OCI-LY7 (cell line): ENCODE measurements at regions of chr2 and their contacts with region 1.

Region 1: DNA sequence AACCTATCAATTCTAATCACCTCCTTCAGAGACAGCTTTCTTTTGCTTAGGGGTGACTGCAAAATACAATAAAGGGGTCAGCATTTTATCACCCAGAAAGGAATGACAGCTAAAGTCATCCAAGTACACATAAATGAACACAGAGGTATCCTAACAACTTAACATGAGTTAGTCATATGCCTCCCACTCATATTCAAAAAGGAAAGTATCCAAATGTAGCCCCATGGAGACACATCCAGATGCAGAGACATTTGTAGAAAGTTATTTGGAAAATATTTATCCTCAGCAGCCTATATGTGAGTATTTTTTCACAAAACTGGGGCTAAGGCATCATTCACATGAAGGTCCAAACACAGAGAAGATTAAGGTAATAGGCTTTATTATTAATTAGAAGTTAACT is 1579.7 kb upstream of the SLC39A10 start:
- DNase-seq: no peak
- H3K4me3 ChIP-seq: no peak overlapping the region
- H3K27ac ChIP-seq: no peak overlapping the region
- H3K4me1 ChIP-seq: no peaks in the 10 kb centered on the region
- CTCF ChIP-seq: no peak

Region 2: DNA sequence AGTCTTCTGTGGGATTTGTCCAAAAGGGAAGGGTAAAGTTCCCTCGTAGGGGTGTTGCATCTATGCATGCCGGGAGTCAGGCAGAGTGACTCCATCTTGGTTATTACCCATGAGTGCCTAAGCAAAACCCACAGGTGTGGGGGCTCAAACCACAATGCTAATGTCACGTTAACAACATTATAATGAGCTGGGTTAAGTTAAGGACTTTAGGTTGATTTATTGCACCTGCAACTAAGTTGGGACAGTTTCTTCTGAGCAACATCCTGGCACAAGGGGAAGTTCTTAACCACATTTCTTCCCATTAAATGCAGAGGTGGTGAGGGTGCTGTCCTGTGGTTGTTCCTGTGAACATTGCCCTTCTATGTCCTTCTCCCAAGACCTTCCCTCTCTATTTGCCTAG is 17.1 kb before region 1 on chr2:
- CTCF ChIA-PET with region 1: no interaction called
- POLR2A ChIA-PET with region 1: interaction called, 10 read pairs
- intact Hi-C with region 1: no loop called
- DNase-seq: no peak
- H3K4me3 ChIP-seq: no peak overlapping the region
- H3K27ac ChIP-seq: no peak overlapping the region
- H3K4me1 ChIP-seq: no peaks in the 10 kb centered on the region
- CTCF ChIP-seq: no peak

Region 3: DNA sequence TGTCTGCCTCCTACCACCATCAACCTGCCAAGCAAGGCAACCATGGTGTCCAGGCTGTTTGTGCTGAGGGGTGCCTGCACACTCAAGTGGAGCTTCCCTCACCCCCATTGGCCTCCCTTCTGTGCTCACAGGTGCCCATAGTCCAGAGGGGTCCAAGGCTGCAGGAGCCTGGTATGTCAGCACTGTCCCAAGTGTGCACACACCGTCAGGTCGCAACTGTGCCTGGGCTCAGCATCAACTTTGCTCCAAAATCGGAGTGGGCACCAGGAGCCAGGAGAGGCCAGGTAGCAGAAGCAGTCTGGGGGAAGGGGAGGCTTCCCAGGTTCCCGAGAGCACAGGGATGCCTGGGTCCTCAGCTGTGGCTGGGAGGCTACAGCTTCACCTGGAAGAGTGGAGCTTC is 51.4 kb after region 1 on chr2:
- CTCF ChIA-PET with region 1: no interaction called
- POLR2A ChIA-PET with region 1: no interaction called
- intact Hi-C with region 1: no loop called
- DNase-seq: no peak
- H3K4me3 ChIP-seq: no peak overlapping the region
- H3K27ac ChIP-seq: no peak overlapping the region
- H3K4me1 ChIP-seq: no peaks in the 10 kb centered on the region
- CTCF ChIP-seq: no peak

Region 4: DNA sequence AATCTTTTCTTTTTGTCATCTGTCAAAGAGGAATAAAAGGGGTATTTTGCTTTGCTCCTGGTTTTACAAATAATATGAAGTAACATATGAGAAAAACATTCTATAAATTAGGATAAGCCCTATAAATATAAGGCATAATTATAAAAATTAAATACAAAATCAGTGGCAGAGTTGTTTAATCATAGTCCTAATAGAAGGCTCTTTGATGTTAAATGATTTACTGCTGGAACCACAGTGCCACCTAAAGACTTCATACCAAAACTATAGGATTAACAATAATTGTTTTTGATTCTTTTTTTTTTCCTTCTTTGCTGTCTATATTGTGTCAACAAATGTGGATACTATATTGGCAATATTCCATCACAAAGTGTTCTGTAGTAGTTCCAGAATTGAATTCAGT is 742.0 kb after region 1 on chr2:
- CTCF ChIA-PET with region 1: no interaction called
- POLR2A ChIA-PET with region 1: no interaction called
- intact Hi-C with region 1: no loop called
- DNase-seq: no peak
- H3K4me3 ChIP-seq: no peak overlapping the region
- H3K27ac ChIP-seq: no peak overlapping the region
- H3K4me1 ChIP-seq: no peaks in the 10 kb centered on the region
- CTCF ChIP-seq: peak; percentile 51